ENCODE measurements at regions of chr1 and their contacts with region 1.

Region 1: DNA sequence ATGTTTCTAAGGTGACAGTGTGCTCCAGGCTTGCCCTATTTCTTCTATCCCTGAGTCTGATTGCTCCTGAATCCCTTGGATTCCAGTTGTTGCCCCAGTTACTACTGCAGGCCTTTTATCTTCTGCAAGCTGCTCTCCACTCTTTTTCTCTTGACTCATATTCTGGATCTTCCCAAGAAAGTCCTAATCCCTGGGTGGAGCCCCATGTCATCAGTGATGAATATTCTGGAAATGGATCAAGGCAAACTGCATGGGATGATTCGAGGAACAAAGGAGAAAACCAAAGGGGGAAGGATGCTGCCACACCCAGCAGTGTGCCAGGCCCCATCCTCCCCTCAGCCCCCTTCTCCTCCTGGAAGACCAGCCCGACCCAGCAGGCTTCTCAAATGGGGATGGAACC is 63.3 kb upstream of the ATP2B4 start:
- DNase-seq: no peak

Region 2: DNA sequence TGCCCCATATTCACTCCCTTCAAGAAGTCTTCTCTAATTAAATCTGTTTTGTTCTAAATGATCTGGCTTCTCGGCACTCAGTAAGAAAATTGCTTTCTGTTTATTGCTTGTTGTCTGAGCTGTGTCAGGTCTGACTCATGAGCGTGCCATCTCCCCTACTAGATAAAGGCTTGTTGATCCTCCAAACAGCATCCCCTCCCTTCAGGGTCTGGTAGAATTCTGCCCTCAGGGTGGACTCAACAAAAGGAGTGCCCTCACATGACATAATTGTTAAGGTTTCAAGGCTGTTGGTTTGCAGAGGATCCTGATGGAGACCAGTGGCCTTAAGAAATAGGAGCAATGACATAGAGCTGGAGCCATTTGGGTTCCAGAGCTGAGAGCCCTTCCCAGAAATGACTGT is 27.3 kb after region 1 on chr1:
- intact Hi-C with region 1: loop called (anchors 2 kb)
- DNase-seq: no peak

Measured in cardiac septum (tissue), 1 donor.